Activated CD4-positive, alpha-beta T cell treated with anti-CD3 and anti-CD28 coated beads, Interleukin-2, amount 10 ng/mL, durations not matched to agents 24 days and 14 days (primary cell): ENCODE measurements at regions of chr6 and their contacts with region 1.

Region 1: DNA sequence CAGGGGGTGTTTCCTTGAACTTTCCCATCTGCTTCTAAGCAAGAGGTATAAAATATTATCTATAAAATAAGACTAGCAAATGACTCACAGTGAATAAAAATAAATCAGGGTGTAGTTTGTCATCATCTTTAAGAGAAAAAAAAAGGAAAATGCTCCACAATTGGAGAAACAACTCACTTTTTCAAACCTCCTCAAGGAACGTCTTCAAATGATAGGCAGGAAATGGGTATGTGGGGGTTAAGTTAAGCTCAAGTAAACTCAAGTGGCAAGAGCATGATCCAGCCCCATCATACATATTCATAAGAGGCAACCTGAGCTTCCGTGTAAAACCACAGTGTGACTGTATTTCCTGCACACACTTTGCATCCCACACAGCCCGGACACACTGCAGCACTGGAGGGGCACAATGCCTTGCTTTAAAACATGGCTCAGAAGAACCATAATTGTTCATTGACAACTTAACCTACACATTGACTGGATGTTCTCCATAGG is 58.5 kb upstream of the CEP85L start:
- DNase-seq: peak; percentile 93
- H3K4me3 Mint-ChIP-seq: peak overlapping the region; percentile 90
- H3K27ac Mint-ChIP-seq: peak overlapping the region; percentile 92
- H3K4me1 Mint-ChIP-seq: peaks cover 65% of the 10 kb centered on the region
- H3K27me3 Mint-ChIP-seq: no peaks in the 10 kb centered on the region

Region 2: GRCh38 chr6:118663993-118664985 is 45.6 kb before region 1 on chr6:
- intact Hi-C with region 1: loop called (anchors 1 kb)
- DNase-seq: peak; percentile 73
- H3K4me3 Mint-ChIP-seq: peak overlapping the region; percentile 83
- H3K27ac Mint-ChIP-seq: peak overlapping the region; percentile 95
- H3K4me1 Mint-ChIP-seq: peaks cover 54% of the 10 kb centered on the region
- H3K27me3 Mint-ChIP-seq: no peaks in the 10 kb centered on the region

Region 3: GRCh38 chr6:118724211-118724610 is 14.3 kb after region 1 on chr6:
- intact Hi-C with region 1: loop called (anchors 1 kb)
- DNase-seq: no peak
- H3K4me3 Mint-ChIP-seq: peak overlapping the region; percentile 36
- H3K27ac Mint-ChIP-seq: peak overlapping the region; percentile 59
- H3K4me1 Mint-ChIP-seq: peaks cover 51% of the 10 kb centered on the region
- H3K27me3 Mint-ChIP-seq: no peaks in the 10 kb centered on the region

Region 4: DNA sequence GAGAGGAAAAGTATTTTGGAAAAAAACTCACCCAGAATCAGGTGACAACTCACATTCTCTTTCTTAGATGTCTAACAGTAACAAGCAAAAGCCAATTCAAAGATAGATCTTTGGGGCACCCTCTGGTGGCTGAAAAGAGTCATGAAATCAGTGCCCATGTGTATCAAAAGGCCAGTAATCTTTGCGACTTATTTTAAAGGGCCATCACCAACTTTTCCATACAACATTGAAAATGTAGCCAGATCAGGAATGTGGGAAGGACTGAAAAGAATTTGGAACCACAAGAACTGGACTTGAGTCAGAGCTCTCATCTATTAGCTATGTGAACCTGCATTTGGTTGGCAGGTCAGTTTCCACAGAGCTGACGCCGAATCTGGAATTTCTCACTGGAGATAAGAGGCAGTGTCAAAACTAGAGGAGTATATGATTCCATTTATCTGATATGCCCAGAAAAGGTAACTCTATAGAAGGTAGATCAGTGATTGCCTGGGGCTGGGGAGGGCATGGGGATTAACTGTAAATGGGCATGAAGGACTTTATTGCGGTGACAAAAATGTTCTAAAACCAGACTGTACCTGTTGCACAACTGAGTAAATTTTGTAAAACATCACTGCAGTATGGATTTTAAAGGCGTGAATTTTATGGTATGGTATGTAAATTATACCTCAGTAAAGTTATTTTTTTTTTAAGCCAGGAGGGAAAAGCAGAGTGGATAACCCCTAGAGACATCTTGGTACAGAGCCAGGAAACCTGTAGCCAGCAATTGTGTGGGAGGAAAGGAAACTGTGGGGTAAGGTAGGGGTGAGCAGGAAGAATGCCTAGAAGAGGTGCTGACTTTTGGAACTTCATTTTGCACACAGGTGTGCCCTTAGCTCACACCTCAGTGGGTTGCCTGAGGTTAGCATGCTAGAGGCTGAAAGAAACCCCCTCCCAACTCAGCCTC is 67.0 kb after region 1 on chr6:
- intact Hi-C with region 1: loop called (anchors 1 kb)
- DNase-seq: peak; percentile 91
- H3K4me3 Mint-ChIP-seq: peak overlapping the region; percentile 35
- H3K27ac Mint-ChIP-seq: peak overlapping the region; percentile 59
- H3K4me1 Mint-ChIP-seq: peaks cover 15% of the 10 kb centered on the region
- H3K27me3 Mint-ChIP-seq: peaks cover 10% of the 10 kb centered on the region